Right lobe of liver (tissue), 6 donors: ENCODE measurements at regions of chr11 and their contacts with region 1.

Region 1: DNA sequence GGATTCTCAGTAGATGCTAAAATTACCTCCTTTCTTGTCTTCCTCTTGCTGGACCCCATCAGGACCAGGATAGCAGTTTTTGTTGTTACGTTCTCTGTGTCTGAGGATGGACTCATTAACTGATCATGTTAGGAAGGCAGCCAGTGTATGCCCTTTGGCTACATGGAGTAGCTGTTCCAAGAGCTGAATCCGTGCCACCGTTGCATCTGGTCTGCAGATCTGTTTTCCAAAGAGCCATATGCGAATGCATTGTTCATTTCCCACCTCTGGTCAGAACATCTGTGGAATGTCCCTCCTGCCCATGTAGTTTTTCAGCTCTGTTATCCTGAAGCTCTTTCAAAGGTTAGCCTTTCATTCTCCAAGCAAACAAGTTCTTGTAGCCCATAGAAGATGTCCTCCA is 188.4 kb downstream of the SPON1 start:
- DNase-seq: no peak
- ATAC-seq: no peak
- H3K4me3 ChIP-seq: no peak overlapping the region
- H3K27ac ChIP-seq: no peak overlapping the region
- H3K4me1 ChIP-seq: no peaks in the 10 kb centered on the region
- H3K27me3 ChIP-seq: no peaks in the 10 kb centered on the region
- CTCF ChIP-seq: no peak
- POLR2A ChIP-seq: no peak

Region 2: DNA sequence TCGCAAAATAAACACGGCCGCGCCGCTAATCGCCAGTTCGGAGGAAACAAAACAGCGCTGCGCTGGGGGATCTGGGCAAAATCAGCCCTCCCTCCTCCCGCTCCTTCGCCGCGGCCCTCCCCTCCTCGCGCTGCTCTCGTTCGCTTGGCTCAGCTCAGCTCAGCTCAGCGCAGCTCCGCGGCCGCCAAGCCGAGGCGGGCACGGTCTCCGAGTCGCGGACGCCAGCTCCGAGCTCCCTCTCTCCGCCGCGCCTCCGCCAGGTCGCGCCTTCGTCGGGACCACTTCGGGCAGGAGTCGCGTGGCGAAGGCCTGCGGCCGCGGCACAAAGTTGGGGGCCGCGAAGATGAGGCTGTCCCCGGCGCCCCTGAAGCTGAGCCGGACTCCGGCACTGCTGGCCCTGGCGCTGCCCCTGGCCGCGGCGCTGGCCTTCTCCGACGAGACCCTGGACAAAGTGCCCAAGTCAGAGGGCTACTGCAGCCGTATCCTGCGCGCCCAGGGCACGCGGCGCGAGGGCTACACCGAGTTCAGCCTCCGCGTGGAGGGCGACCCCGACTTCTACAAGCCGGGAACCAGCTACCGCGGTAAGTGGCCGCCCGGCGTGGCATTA is 188.2 kb before region 1 on chr11 and contains the start of gene SPON1:
- intact Hi-C with region 1: loop called in 1 of 2 experiments (anchors 10 kb)
- DNase-seq: peak in 1 of 3 donors; percentile 38
- ATAC-seq: peak; percentile 6 to 39 (median 30)
- H3K4me3 ChIP-seq: peak within 1 kb of the TSS; percentile 9 to 24 (median 16)
- H3K27ac ChIP-seq: no peak within 1 kb of the TSS
- H3K4me1 ChIP-seq: peaks cover 0 to 24% (median 0%) of the 10 kb centered on the region in 4 donors
- H3K27me3 ChIP-seq: peaks cover 9 to 18% of the 10 kb centered on the region in 2 donors
- CTCF ChIP-seq: no peak
- POLR2A ChIP-seq: no peak
- total RNA-seq, gene SPON1: 0.51 to 2.4 (median 1.6) TPM